Posterior vena cava (tissue), 2 donors: ENCODE measurements at regions of chr10 and their contacts with region 1.

Region 1: DNA sequence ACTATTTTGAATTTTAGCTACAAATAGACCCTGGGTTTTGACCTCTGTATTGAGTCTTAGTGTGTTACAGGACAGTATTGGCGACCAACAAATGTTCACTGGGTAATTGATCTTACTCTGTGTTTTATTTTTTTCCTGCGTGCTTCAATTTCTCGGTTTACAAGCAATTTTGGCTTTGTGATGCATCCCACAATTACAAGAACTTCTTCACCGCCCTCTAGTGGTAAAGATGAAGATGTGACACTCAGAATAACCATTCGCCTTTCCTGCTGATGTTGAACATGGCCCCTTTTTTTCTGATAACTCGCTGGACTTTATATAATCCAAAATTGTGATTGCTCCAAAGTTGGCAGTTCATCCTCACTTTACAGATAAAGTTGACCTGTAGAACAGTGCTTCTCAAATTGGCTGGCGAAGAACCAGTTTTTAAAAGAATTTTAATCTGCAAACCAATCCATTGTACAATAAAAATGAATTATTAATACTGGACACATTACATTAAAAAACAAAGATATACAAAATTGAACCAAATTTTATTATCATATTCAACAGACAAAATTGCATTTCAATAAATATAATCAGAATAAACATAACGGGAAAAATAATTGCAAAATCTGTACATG is 20.2 kb upstream of the SMC3 start:
- DNase-seq: no peak

Region 2: DNA sequence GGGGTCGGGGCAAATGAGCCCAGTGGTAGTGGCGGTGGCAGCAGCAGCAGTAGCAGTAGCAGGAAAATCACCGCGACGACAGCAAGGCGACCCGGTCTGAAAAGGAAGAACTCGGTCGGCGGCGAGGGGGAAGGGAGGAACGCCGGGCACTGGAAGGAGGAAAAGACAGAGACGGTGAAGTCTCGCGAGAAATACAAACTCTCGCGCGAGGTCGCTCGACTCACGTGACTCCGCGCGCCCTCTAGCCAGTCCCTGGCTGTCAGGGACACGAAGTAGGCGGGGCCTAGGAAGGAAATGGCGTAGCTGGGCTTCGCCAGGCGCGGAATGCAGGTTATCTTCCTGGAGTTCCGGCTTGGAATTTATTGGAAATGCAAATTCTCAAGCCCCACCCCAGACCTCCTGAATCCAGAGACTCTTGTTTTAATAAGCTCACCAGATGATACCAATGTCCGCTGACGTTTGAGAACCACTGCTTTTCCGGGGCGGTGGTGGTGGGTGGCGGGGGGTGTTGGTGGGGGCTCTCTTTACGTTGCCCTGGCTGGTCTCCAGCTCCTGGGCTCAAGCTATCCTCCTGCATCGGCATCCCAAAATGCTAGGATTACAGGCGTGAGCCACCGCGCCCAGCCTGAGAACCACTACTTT is 242.3 kb before region 1 on chr10 and contains the start of gene SMNDC1:
- intact Hi-C with region 1: loop called (anchors 2 to 5 kb)
- DNase-seq: peak; percentile 99
- total RNA-seq, gene SMNDC1: 26.4 to 28.1 TPM

Region 3: GRCh38 chr10:110311357-110311949 is 235.8 kb before region 1 on chr10:
- intact Hi-C with region 1: loop called (anchors 2 to 5 kb)
- DNase-seq: no peak

Region 4: DNA sequence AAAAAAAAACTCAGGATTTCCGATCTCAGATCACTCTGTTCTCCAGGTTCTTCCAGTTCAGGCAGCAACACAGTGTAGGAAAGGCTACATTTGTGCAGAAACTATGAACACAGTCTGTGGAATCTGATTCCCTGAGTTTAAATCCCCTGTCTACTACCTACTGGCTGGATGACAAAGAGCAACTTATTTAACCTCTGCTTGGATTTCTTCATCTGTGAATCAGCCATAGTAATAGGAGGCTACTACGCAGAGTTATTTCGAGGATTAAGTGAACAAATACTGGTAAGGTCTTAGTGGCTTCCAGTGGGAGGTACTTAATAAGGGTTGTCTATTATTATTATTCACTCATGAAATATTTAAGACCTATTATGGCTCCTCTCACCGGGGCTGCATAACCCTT is 280.2 kb after region 1 on chr10:
- intact Hi-C with region 1: no loop called
- DNase-seq: no peak